ENCODE measurements at regions of chr6 and their contacts with region 1.

Region 1: GRCh38 chr6:32522302-32523047 is 7.6 kb downstream of the HLA-DRB5 start:
- DNase-seq: no peak
- H3K4me3 ChIP-seq: no peak overlapping the region
- H3K27ac ChIP-seq: no peak overlapping the region
- H3K4me1 ChIP-seq: no peaks in the 10 kb centered on the region
- H3K27me3 ChIP-seq: peaks cover 0 to 1% of the 10 kb centered on the region in 2 experiments
- CTCF ChIP-seq: no peak
- POLR2A ChIP-seq: no peak

Region 2: DNA sequence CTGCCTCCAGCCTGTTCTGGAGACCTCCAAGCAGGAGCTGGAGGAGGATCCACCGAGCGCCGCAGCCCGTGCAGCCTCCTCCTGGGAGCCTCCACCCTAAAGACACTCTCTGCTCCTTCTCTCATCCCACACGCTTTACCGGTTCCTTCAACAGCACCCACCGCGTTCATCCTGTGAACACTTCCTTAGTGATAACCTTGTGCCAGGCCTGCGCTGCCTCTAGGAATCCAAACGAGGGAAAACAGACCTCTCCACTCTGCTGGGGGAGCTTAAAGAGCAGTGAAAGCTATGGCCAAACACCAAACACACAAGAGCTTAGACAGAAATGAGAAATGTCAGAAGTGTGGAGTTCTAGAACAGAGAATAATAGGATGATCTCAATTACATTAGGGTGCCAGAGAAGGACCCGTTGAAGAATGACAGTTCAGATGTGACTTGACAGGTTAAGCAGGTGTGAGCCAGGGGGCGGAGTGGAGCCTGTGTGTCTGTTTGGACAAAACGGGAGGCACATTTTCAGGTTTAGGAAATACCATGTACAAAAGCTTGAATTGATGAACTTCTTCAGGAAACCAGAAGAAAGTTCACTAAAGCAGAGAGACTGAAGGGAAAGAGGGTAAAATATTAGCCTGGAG is 36.1 kb after region 1 on chr6:
- CTCF ChIA-PET with region 1: interaction called, 9 read pairs
- POLR2A ChIA-PET with region 1: no interaction called
- dilution Hi-C with region 1: no loop called
- intact Hi-C with region 1: loop called (anchors 5 kb)
- DNase-seq: no peak
- H3K4me3 ChIP-seq: no peak overlapping the region
- H3K27ac ChIP-seq: no peak overlapping the region
- H3K4me1 ChIP-seq: no peaks in the 10 kb centered on the region
- H3K27me3 ChIP-seq: peaks cover 2 to 3% of the 10 kb centered on the region in 2 experiments
- CTCF ChIP-seq: no peak
- POLR2A ChIP-seq: no peak

Region 3: GRCh38 chr6:33547499-33547898 is 1025.0 kb after region 1 on chr6:
- CTCF ChIA-PET with region 1: no interaction called
- POLR2A ChIA-PET with region 1: no interaction called
- dilution Hi-C with region 1: no loop called
- intact Hi-C with region 1: no loop called
- DNase-seq: no peak
- H3K4me3 ChIP-seq: no peak overlapping the region
- H3K27ac ChIP-seq: no peak overlapping the region
- H3K4me1 ChIP-seq: no peaks in the 10 kb centered on the region
- H3K27me3 ChIP-seq: no peaks in the 10 kb centered on the region
- CTCF ChIP-seq: no peak
- POLR2A ChIP-seq: no peak